Activated CD8-positive, alpha-beta memory T cell treated with anti-CD3 and anti-CD28 coated beads, Interleukin-2, amount 10 ng/mL, durations not matched to agents 7 days and 5 days (primary cell): ENCODE measurements at regions of chr11 and their contacts with region 1.

Region 1: GRCh38 chr11:59171508-59172322 is at the start of gene DTX4:
- DNase-seq: peak; percentile 94
- ATAC-seq: peak; percentile 89
- H3K4me3 Mint-ChIP-seq: peak within 1 kb of the TSS; percentile 60
- H3K27ac Mint-ChIP-seq: no peak within 1 kb of the TSS
- H3K4me1 Mint-ChIP-seq: peaks cover 9% of the 10 kb centered on the region
- H3K27me3 Mint-ChIP-seq: peaks cover 35% of the 10 kb centered on the region
- total RNA-seq, gene DTX4: 0.12 to 0.28 TPM

Region 2: GRCh38 chr11:59106363-59107336 is 65.1 kb before region 1 on chr11 and contains the start of gene FAM111B:
- CTCF ChIA-PET with region 1: interaction called, 13 read pairs
- DNase-seq: peak; percentile 89
- ATAC-seq: peak; percentile 93
- H3K4me3 Mint-ChIP-seq: peak within 1 kb of the TSS; percentile 81
- H3K27ac Mint-ChIP-seq: peak within 1 kb of the TSS; percentile 80
- H3K4me1 Mint-ChIP-seq: peaks cover 66% of the 10 kb centered on the region
- H3K27me3 Mint-ChIP-seq: peaks cover 6% of the 10 kb centered on the region
- total RNA-seq, gene FAM111B: 42.7 to 46.5 TPM

Region 3: GRCh38 chr11:59158206-59159068 is 13.3 kb before region 1 on chr11:
- CTCF ChIA-PET with region 1: interaction called, 43 read pairs
- DNase-seq: peak; percentile 73
- ATAC-seq: peak; percentile 95
- H3K4me3 Mint-ChIP-seq: no peak overlapping the region
- H3K27ac Mint-ChIP-seq: no peak overlapping the region
- H3K4me1 Mint-ChIP-seq: peaks cover 6% of the 10 kb centered on the region
- H3K27me3 Mint-ChIP-seq: peaks cover 16% of the 10 kb centered on the region

Region 4: DNA sequence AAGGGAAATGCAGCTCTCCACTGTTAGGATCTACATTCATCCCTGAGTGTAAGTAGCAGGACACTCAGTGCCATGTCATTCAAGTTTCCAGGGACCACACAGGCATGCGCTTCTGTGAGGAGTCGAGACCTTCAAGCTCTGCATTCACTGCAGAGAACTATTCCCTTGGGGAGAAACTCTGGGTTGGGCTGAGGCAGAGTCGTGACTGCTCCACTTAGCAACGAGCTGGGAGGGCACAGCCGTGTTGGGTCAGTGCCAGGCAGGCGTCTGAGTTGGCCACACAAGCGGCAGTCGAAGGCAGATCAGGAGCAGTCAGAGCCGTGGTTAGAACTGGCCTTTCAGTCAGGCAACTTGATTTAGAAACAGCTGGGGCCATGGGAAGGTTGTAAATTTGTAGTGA is 26.3 kb after region 1 on chr11:
- CTCF ChIA-PET with region 1: interaction called, 28 read pairs
- DNase-seq: no peak
- ATAC-seq: no peak
- H3K4me3 Mint-ChIP-seq: no peak overlapping the region
- H3K27ac Mint-ChIP-seq: no peak overlapping the region
- H3K4me1 Mint-ChIP-seq: peaks cover 5% of the 10 kb centered on the region
- H3K27me3 Mint-ChIP-seq: peaks cover under 1% of the 10 kb centered on the region

Region 5: GRCh38 chr11:59224351-59224928 is 52.7 kb after region 1 on chr11:
- CTCF ChIA-PET with region 1: interaction called, 10 read pairs
- DNase-seq: no peak
- ATAC-seq: no peak
- H3K4me3 Mint-ChIP-seq: no peak overlapping the region
- H3K27ac Mint-ChIP-seq: no peak overlapping the region
- H3K4me1 Mint-ChIP-seq: no peaks in the 10 kb centered on the region
- H3K27me3 Mint-ChIP-seq: peaks cover 17% of the 10 kb centered on the region

Region 6: DNA sequence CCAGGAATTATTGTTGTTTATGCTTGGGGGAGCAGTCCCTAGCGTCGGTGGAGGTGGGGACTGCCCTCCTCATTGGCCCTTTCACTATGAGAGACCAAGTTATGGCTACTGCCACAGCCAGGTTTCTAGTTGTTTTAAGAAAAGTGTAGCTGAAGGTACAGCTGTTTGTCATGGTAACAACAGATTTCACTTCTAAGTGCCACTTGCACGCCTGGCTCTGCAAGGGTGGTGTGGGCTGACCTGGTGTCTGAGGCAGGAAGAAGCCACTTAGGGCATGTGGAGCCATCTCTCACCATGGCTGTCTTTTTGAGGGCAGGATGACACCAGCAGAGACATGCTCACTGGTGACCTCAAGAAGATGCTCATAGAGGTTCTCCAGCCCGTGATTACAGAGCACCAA is 87.3 kb after region 1 on chr11:
- CTCF ChIA-PET with region 1: no interaction called
- DNase-seq: no peak
- ATAC-seq: no peak
- H3K4me3 Mint-ChIP-seq: no peak overlapping the region
- H3K27ac Mint-ChIP-seq: no peak overlapping the region
- H3K4me1 Mint-ChIP-seq: no peaks in the 10 kb centered on the region
- H3K27me3 Mint-ChIP-seq: no peaks in the 10 kb centered on the region

Region 7: DNA sequence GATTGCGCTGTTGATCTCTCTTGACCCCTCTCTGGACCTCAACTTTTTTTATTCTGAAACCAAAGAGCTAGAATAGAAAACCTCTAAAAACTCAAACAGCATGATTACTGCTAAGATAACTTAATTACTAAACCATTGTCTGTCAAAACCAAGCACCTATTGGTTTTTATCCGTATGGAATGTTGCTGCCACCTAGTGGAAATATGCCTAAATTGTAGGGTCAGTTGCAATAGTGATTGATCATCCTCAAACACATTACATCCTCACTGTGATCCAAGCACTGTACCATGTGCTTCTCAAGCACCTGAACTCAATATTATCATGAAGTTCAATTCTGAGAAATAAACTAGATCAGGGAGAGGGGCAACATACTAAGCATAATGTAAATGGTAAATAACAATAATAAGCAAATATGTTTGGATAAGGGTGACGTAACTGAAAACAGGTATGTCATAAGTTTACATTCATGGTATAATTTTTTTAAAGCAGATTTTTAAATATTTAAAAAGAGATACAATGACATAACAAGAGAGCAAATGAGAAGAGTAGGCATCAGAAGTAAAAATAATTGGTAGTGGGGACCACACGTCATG is 258.3 kb after region 1 on chr11:
- CTCF ChIA-PET with region 1: interaction called, 17 read pairs
- DNase-seq: no peak
- ATAC-seq: peak; percentile 61
- H3K4me3 Mint-ChIP-seq: no peak overlapping the region
- H3K27ac Mint-ChIP-seq: no peak overlapping the region
- H3K4me1 Mint-ChIP-seq: no peaks in the 10 kb centered on the region
- H3K27me3 Mint-ChIP-seq: peaks cover 18% of the 10 kb centered on the region